ENCODE measurements at regions of chr20 and their contacts with region 1.

Region 1: GRCh38 chr20:47809913-47810622 is 24.8 kb upstream of the SULF2 start:
- DNase-seq: no peak
- H3K4me3 ChIP-seq: no peak overlapping the region
- H3K27ac ChIP-seq: no peak overlapping the region
- H3K4me1 ChIP-seq: no peaks in the 10 kb centered on the region
- H3K27me3 ChIP-seq: peaks cover 0 to 4% (median 0%) of the 10 kb centered on the region in 4 donors
- CTCF ChIP-seq: no peak
- EP300 ChIP-seq: no peak
- POLR2A ChIP-seq: no peak

Region 2: DNA sequence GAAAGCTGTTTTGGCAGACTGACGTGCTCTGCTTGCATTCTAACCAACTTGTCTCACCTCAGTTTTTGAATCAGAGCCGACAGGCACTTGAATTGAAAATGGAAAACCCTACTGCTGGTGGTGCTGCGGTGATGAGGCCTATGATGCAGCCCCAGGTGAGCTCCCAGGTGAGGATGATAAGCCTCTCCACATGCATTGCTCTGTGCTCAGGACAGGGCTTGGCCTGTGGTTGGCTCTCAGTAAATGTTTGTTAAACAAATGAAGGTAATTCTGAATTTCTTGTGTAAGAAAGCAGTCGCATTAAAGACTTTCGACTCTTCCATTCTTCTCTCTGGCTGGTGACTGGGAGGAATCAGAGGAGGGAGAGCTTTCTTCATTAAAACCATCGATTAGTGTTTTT is 161.1 kb before region 1 on chr20:
- intact Hi-C with region 1: no loop called
- DNase-seq: no peak
- H3K4me3 ChIP-seq: no peak overlapping the region
- H3K27ac ChIP-seq: no peak overlapping the region
- H3K4me1 ChIP-seq: no peaks in the 10 kb centered on the region
- H3K27me3 ChIP-seq: no peaks in the 10 kb centered on the region
- CTCF ChIP-seq: no peak
- EP300 ChIP-seq: no peak
- POLR2A ChIP-seq: no peak

Region 3: DNA sequence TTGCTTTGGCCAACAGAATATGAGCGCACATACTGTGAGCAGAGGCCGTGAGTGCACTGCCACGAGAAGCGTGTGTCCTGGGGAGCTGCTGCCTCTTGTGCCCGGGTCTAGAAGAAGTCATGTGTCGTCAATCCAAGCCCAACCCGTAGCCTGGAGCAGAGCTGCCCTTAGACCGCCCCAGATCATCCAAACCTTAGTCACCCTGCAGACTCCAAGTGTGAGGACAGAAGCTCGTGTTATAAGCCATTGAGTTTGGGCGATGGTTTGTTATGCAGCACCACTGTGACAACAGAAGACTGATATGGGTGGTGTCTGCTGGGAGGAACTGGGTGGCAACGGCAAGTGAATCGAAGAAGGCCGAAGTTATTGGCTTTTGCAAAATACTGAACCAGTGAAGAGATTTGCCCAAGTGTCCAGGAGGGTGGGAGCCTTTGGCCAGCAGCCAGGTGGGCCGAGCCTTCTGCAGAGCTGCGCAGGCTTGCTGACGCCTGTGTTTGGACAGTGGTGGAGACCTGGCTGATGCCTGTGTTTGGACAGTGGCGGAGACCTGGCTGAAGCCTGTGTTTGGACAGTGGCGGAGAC is 76.5 kb after region 1 on chr20:
- intact Hi-C with region 1: loop called (anchors 10 kb)
- DNase-seq: no peak
- H3K4me3 ChIP-seq: no peak overlapping the region
- H3K27ac ChIP-seq: no peak overlapping the region
- H3K4me1 ChIP-seq: no peaks in the 10 kb centered on the region
- H3K27me3 ChIP-seq: no peaks in the 10 kb centered on the region
- CTCF ChIP-seq: no peak
- EP300 ChIP-seq: no peak
- POLR2A ChIP-seq: no peak